ENCODE measurements at regions of chr9 and their contacts with region 1.

Region 1: DNA sequence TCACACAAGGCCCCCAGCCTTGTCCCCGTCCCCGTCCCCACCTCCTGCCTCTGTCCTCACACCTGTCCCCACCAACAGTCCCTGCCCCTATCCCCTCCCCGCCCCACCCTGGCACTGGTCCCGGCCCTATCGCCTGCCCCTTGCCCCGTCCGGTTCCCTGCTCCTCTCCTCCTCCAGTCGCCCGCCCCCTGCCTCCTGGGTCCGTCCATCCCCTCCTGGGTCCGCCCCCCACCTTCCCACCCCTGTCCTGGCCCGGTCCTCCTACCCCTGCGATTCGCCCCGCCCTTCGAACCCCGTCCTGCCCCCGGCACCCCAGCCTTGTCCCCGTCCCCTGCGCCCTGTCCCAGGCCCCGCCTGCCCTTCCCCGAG is 389 bp downstream of the EDF1 start:
- DNase-seq: no peak
- H3K4me3 Mint-ChIP-seq: peak overlapping the region; percentile 89
- H3K27ac Mint-ChIP-seq: peak overlapping the region; percentile 82
- H3K4me1 Mint-ChIP-seq: peaks cover 10% of the 10 kb centered on the region
- H3K27me3 Mint-ChIP-seq: no peaks in the 10 kb centered on the region

Region 2: GRCh38 chr9:136885950-136886578 is 20.3 kb after region 1 on chr9 and contains the start of gene TRAF2:
- intact Hi-C with region 1: loop called (anchors 1 kb)
- DNase-seq: peak; percentile 99
- H3K4me3 Mint-ChIP-seq: peak within 1 kb of the TSS; percentile 98
- H3K27ac Mint-ChIP-seq: peak within 1 kb of the TSS; percentile 93
- H3K4me1 Mint-ChIP-seq: peaks cover 44% of the 10 kb centered on the region
- H3K27me3 Mint-ChIP-seq: no peaks in the 10 kb centered on the region
- total RNA-seq, gene TRAF2: 67.4 and 76.3 TPM in 2 replicates

Region 3: GRCh38 chr9:136902259-136902821 is 36.6 kb after region 1 on chr9:
- intact Hi-C with region 1: loop called (anchors 1 kb)
- DNase-seq: peak; percentile 88
- H3K4me3 Mint-ChIP-seq: peak overlapping the region; percentile 80
- H3K27ac Mint-ChIP-seq: peak overlapping the region; percentile 99
- H3K4me1 Mint-ChIP-seq: peaks cover 63% of the 10 kb centered on the region
- H3K27me3 Mint-ChIP-seq: no peaks in the 10 kb centered on the region

Region 4: DNA sequence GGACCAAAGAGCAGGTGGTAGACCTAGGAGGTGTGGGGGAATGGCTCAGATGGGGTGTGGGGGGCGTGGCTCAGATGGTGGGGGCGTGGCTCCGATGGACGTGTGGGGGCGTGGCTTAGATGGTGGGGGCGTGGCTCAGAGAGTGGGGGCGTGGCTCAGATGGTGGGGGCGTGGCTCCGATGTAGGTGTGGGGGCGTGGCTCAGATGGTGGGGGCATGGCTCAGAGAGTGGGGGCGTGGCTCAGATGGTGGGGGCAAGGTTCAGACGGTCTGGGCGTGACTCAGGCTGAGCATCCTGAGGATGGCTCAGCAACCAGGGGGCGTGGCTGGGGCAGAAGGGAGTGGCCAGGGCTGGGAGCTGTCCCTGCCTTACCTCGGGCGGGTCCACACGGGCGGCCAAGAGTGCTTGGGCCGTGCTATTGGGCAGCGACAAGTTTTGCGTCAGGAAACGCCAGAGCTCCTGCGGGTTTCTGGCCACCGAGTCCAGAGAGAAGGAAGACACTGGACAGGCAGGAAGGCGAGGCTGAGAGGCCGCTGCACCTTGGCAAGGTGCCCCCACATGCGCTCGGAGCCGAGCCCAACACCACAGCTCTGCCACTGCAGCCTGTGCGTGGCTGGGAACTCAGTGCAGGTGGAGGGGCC is 156.4 kb after region 1 on chr9:
- intact Hi-C with region 1: loop called (anchors 1 kb)
- DNase-seq: peak; percentile 64
- H3K4me3 Mint-ChIP-seq: no peak overlapping the region
- H3K27ac Mint-ChIP-seq: peak overlapping the region; percentile 29
- H3K4me1 Mint-ChIP-seq: no peaks in the 10 kb centered on the region
- H3K27me3 Mint-ChIP-seq: no peaks in the 10 kb centered on the region

Region 5: DNA sequence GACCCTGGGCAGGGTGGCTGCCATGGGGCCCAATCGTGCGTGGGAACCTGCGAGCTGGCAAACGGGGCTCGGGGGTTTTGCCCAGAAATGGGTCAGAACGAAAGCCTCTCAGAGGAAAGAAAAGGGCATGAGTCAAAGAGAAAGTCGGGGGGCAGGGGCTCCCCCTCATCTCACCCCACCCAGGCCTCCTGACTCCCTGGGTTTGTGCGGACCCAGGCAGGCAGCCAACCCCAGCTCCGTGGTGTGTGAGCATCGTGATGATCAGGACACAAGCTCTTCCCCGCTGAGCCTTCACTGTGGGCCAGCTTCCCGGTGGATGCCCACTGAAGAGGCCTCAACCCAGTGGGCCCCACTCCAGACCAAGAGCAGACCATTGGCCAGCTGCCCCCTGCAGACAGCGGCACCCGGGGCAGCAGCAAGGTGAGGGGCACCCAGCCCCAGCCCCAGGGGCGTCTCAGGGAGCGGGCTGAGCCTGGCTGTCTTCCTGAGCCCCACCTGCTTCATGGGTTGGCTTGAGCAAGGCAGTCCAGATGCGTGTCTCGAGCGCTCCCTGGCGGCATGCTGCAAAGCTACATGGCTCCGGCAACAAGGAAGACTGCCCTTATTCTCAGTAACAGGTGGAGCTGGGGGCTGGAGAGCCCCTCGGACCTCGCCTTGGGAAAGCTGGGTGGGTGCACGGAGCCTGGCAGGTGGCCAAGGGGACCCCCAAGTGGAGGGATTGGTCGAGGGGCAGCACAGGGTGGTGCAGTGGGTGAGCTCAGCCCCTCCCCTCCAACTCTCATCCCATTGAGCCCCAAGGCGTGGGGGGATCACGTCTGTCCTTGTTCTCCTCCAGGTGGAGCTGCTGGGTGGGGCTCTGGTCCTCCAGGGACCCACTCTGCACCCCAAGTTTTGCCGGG is 169.4 kb after region 1 on chr9:
- intact Hi-C with region 1: loop called (anchors 1 kb)
- DNase-seq: peak; percentile 79
- H3K4me3 Mint-ChIP-seq: peak overlapping the region; percentile 67
- H3K27ac Mint-ChIP-seq: peak overlapping the region; percentile 87
- H3K4me1 Mint-ChIP-seq: peaks cover 29% of the 10 kb centered on the region
- H3K27me3 Mint-ChIP-seq: no peaks in the 10 kb centered on the region